Naive thymus-derived CD4-positive, alpha-beta T cell (primary cell): ENCODE measurements at regions of chr15 and their contacts with region 1.

Region 1: GRCh38 chr15:38699633-38700230 is 135.1 kb upstream of the RASGRP1 start:
- DNase-seq: peak in 8 of 9 donors; percentile 43 to 77 (median 71)
- ATAC-seq: peak; percentile 84
- H3K4me3 ChIP-seq: no peak overlapping the region
- H3K4me3 Mint-ChIP-seq: peak overlapping the region in 4 of 10 donors; percentile 8 to 73 (median 48)
- H3K27ac ChIP-seq: no peak overlapping the region
- H3K27ac Mint-ChIP-seq: peak overlapping the region; percentile 34 to 92 (median 77)
- H3K4me1 ChIP-seq: peaks cover 36 to 48% of the 10 kb centered on the region in 2 donors
- H3K4me1 Mint-ChIP-seq: peaks cover 23 to 71% (median 44%) of the 10 kb centered on the region in 7 donors
- H3K27me3 ChIP-seq: no peaks in the 10 kb centered on the region
- H3K27me3 Mint-ChIP-seq: no peaks in the 10 kb centered on the region

Region 2: GRCh38 chr15:38453971-38454695 is 245.6 kb before region 1 on chr15 and contains the start of gene FAM98B:
- CTCF ChIA-PET with region 1: interaction called, 14 read pairs
- POLR2A ChIA-PET with region 1: interaction called, 23 read pairs
- intact Hi-C with region 1: no loop called
- DNase-seq: peak; percentile 73 to 94 (median 82)
- ATAC-seq: peak; percentile 92
- H3K4me3 ChIP-seq: peak within 1 kb of the TSS; percentile 98
- H3K4me3 Mint-ChIP-seq: peak within 1 kb of the TSS; percentile 86 to 99 (median 96)
- H3K27ac ChIP-seq: peak within 1 kb of the TSS; percentile 95
- H3K27ac Mint-ChIP-seq: peak within 1 kb of the TSS; percentile 92 to 99 (median 95)
- H3K4me1 ChIP-seq: peaks cover 13 to 22% of the 10 kb centered on the region in 2 donors
- H3K4me1 Mint-ChIP-seq: peaks cover 24 to 46% (median 36%) of the 10 kb centered on the region in 7 donors
- H3K27me3 ChIP-seq: no peaks in the 10 kb centered on the region
- H3K27me3 Mint-ChIP-seq: peaks cover 0 to 19% (median 0%) of the 10 kb centered on the region in 5 donors
- total RNA-seq, gene FAM98B: 16.2 to 39.5 (median 27.6) TPM

Region 3: GRCh38 chr15:38479266-38479665 is 220.5 kb before region 1 on chr15:
- CTCF ChIA-PET with region 1: interaction called, 42 read pairs
- POLR2A ChIA-PET with region 1: interaction called, 5 read pairs
- intact Hi-C with region 1: loop called (anchors 1 kb)
- DNase-seq: no peak
- ATAC-seq: no peak
- H3K4me3 ChIP-seq: no peak overlapping the region
- H3K4me3 Mint-ChIP-seq: no peak overlapping the region
- H3K27ac ChIP-seq: no peak overlapping the region
- H3K27ac Mint-ChIP-seq: peak overlapping the region in 6 of 9 donors; percentile 17 to 87 (median 80)
- H3K4me1 ChIP-seq: peaks cover 14 to 19% of the 10 kb centered on the region in 2 donors
- H3K4me1 Mint-ChIP-seq: peaks cover 26 to 56% (median 41%) of the 10 kb centered on the region in 7 donors
- H3K27me3 ChIP-seq: no peaks in the 10 kb centered on the region
- H3K27me3 Mint-ChIP-seq: no peaks in the 10 kb centered on the region

Region 4: DNA sequence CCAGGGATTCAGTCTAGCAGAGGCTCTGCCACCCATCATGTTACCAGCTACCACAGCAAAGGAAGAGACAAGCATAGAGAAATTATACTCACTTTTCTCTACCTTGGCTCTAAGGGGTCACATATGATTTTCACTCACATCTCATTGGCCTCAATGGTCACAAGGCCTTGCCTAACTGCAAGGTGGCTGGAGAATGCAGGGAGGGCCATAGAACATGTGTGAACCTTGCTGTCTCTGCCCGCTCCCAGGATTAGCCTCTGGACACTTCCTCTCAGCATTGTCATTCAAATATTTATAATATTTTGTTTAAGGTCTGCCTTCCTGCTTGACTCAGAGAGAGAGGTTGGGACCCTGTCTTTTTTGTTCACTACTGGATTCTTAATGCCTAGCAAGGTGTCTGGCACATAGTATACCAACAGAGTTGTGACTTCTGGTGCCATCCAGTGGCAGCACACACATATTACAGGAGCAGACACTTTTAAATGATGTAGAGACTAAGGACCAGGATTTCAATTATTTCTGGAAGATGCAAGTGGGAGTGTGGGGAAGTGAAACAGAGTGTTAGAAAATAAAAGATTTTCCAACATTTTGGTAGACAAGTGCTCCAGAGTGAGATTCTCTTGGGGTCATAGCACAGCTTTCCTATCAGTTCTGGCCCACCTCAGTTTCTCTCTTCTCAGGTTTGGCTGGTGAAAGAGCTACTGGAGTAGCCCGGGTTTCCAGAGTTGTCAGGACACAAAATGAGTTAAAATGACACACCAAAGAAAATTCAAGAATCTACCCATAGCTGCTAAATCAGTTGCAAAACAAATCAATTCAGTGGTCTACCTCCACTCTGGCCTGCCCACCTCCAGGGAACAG is 16.1 kb before region 1 on chr15:
- CTCF ChIA-PET with region 1: interaction called, 126 read pairs
- POLR2A ChIA-PET with region 1: interaction called, 59 read pairs
- intact Hi-C with region 1: loop called (anchors 1 kb)
- DNase-seq: peak; percentile 43 to 79 (median 71)
- ATAC-seq: peak; percentile 76
- H3K4me3 ChIP-seq: peak overlapping the region; percentile 22
- H3K4me3 Mint-ChIP-seq: peak overlapping the region; percentile 1 to 76 (median 55)
- H3K27ac ChIP-seq: peak overlapping the region; percentile 74
- H3K27ac Mint-ChIP-seq: peak overlapping the region; percentile 83 to 99 (median 95)
- H3K4me1 ChIP-seq: peaks cover 62 to 63% of the 10 kb centered on the region in 2 donors
- H3K4me1 Mint-ChIP-seq: peaks cover 53 to 90% (median 84%) of the 10 kb centered on the region in 7 donors
- H3K27me3 ChIP-seq: no peaks in the 10 kb centered on the region
- H3K27me3 Mint-ChIP-seq: no peaks in the 10 kb centered on the region